ENCODE measurements at regions of chr22 and their contacts with region 1.

Region 1: GRCh38 chr22:37817705-37818408 is 5.3 kb upstream of the GALR3 start:
- DNase-seq: peak; percentile 86
- H3K4me3 ChIP-seq: peak overlapping the region in 1 of 3 experiments; percentile 5
- H3K27ac ChIP-seq: no peak overlapping the region
- H3K4me1 ChIP-seq: peaks cover 9% of the 10 kb centered on the region
- H3K27me3 ChIP-seq: peaks cover 2 to 3% of the 10 kb centered on the region in 2 experiments
- CTCF ChIP-seq: peak; percentile 95 to 98
- POLR2A ChIP-seq: no peak

Region 2: GRCh38 chr22:37581504-37581903 is 236.4 kb before region 1 on chr22:
- CTCF ChIA-PET with region 1: no interaction called
- POLR2A ChIA-PET with region 1: no interaction called
- dilution Hi-C with region 1: no loop called
- intact Hi-C with region 1: no loop called
- DNase-seq: no peak
- H3K4me3 ChIP-seq: no peak overlapping the region
- H3K27ac ChIP-seq: no peak overlapping the region
- H3K4me1 ChIP-seq: no peaks in the 10 kb centered on the region
- H3K27me3 ChIP-seq: peaks cover 4% of the 10 kb centered on the region in 2 experiments
- CTCF ChIP-seq: no peak
- POLR2A ChIP-seq: no peak

Region 3: DNA sequence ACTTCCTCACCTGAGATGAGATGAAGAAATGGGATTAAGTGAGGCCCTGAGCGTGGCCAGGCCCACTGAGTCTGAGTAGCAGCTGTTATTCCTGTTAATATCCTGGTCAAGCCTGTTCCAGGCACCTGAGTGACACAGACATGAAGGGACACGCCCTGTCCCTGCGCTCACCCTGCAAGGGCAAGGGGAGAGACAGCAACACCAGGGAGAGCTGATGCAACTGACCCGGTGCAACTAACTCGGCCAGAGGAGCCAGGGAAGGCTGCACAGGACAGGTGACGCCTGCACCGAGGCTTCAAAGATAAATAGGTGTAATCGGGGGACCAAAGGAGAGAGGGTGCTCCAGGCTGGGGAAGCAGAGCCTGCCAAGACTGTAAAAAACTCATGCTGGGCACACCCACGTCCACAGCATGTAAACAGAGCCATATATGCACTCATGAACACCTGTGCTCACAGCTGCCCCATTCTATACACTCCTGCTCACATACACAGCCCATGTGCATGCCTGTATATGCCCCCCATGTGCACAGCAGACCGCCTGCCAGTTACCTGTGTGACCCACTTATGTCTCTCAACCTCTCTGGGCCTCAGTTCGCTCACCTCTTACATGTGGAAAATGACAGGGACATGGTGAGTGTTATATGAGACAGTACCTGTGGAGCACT is 32.9 kb before region 1 on chr22:
- CTCF ChIA-PET with region 1: no interaction called
- POLR2A ChIA-PET with region 1: no interaction called
- dilution Hi-C with region 1: no loop called
- intact Hi-C with region 1: no loop called
- DNase-seq: no peak
- H3K4me3 ChIP-seq: no peak overlapping the region
- H3K27ac ChIP-seq: no peak overlapping the region
- H3K4me1 ChIP-seq: peaks cover 15% of the 10 kb centered on the region
- H3K27me3 ChIP-seq: no peaks in the 10 kb centered on the region
- CTCF ChIP-seq: no peak
- POLR2A ChIP-seq: no peak

Region 4: GRCh38 chr22:37832022-37832857 is 14.4 kb after region 1 on chr22:
- CTCF ChIA-PET with region 1: interaction called, 24 read pairs
- POLR2A ChIA-PET with region 1: no interaction called
- dilution Hi-C with region 1: no loop called
- intact Hi-C with region 1: no loop called
- DNase-seq: no peak
- H3K4me3 ChIP-seq: no peak overlapping the region
- H3K27ac ChIP-seq: no peak overlapping the region
- H3K4me1 ChIP-seq: no peaks in the 10 kb centered on the region
- H3K27me3 ChIP-seq: no peaks in the 10 kb centered on the region
- CTCF ChIP-seq: no peak
- POLR2A ChIP-seq: no peak

Region 5: DNA sequence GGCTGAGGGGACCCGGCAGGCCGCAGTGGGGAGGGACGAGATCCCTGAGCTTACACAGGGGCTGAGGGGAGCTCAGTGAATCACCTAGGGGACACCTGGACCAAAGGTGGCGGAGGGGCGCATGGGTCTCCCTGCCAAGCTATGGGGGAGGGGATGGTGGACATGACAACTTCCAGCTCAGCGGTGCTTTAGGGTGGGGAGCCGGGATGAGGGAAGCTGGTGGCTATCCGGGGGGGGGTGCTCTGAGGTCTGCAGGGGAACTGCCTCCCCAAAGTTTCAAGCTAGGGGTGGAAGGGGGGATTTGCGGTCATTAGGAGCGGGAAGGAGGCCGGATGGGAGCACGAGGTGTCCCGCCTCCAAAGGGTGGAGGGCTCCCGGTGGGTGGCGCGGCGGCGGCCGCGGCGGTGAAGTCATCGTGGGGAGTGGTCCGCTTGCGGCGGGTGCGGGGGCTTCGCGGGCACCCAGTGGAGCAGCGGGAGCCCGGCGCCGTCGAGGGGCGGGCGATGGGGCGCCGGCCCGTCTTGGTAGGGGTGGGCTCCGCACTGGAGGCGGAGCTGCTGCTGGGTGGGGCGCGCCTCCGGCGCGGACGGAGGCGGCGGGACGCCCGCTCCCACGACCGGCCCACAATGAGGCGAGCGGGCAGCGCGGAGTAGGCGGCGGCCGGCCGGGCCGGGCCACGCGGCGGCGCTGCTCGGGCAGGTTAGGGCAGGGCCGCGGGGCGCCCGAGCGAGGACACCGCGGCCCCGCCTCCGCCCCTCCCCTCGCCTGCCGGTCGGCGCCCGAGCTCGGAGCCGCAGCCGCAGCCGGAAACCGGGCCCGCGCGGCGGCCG is 87.9 kb after region 1 on chr22 and contains the start of gene MICALL1:
- CTCF ChIA-PET with region 1: interaction called, 13 read pairs
- POLR2A ChIA-PET with region 1: no interaction called
- dilution Hi-C with region 1: no loop called
- intact Hi-C with region 1: no loop called
- DNase-seq: peak; percentile 69
- H3K4me3 ChIP-seq: peak within 1 kb of the TSS; percentile 55 to 76 (median 67)
- H3K27ac ChIP-seq: peak within 1 kb of the TSS; percentile 94
- H3K4me1 ChIP-seq: peaks cover 20% of the 10 kb centered on the region
- H3K27me3 ChIP-seq: no peaks in the 10 kb centered on the region
- CTCF ChIP-seq: no peak
- POLR2A ChIP-seq: peak; percentile 73
- total RNA-seq, gene MICALL1: 65.2 and 66.9 TPM in 2 replicates

Region 6: GRCh38 chr22:37953437-37954179 is 135.8 kb after region 1 on chr22 and contains the starts of genes C22orf23 and POLR2F:
- CTCF ChIA-PET with region 1: interaction called, 4 read pairs
- POLR2A ChIA-PET with region 1: no interaction called
- dilution Hi-C with region 1: no loop called
- intact Hi-C with region 1: loop called (anchors 5 kb)
- DNase-seq: peak; percentile 97
- H3K4me3 ChIP-seq: peak within 1 kb of the TSS; percentile 7 to 96 (median 54)
- H3K27ac ChIP-seq: no peak within 1 kb of the TSS
- H3K4me1 ChIP-seq: peaks cover 14% of the 10 kb centered on the region
- H3K27me3 ChIP-seq: no peaks in the 10 kb centered on the region
- CTCF ChIP-seq: no peak
- POLR2A ChIP-seq: peak; percentile 93
- total RNA-seq, gene C22orf23: 0.44 and 0.46 TPM in 2 replicates
- total RNA-seq, gene POLR2F: 98.3 and 106 TPM in 2 replicates

Measured in endothelial cell of umbilical vein (primary cell).